PC-9 (cell line): ENCODE measurements at regions of chr10 and their contacts with region 1.

Region 1: GRCh38 chr10:3623746-3624145 is 161.3 kb downstream of the KLF6 start:
- DNase-seq: peak; percentile 55 to 92
- H3K4me3 ChIP-seq: peak overlapping the region; percentile 49; the same call in 1 of the 2 replicates
- H3K27ac ChIP-seq: peak overlapping the region; percentile 100
- H3K4me1 ChIP-seq: peaks cover 48% of the 10 kb centered on the region
- H3K27me3 ChIP-seq: no peaks in the 10 kb centered on the region
- CTCF ChIP-seq: no peak

Region 2: GRCh38 chr10:3248888-3249758 is 374.6 kb before region 1 on chr10:
- CTCF ChIA-PET with region 1: no interaction called
- POLR2A ChIA-PET with region 1: interaction called, 3 read pairs
- intact Hi-C with region 1: loop called (anchors 5 kb)
- DNase-seq: peak; percentile 41 to 81
- H3K4me3 ChIP-seq: peak overlapping the region; percentile 24; the same call in 1 of the 2 replicates
- H3K27ac ChIP-seq: peak overlapping the region; percentile 97
- H3K4me1 ChIP-seq: peaks cover 18% of the 10 kb centered on the region
- H3K27me3 ChIP-seq: no peaks in the 10 kb centered on the region
- CTCF ChIP-seq: no peak

Region 3: GRCh38 chr10:3435671-3436070 is 188.1 kb before region 1 on chr10:
- CTCF ChIA-PET with region 1: no interaction called
- POLR2A ChIA-PET with region 1: interaction called, 30 read pairs
- intact Hi-C with region 1: no loop called
- DNase-seq: no peak
- H3K4me3 ChIP-seq: no peak overlapping the region
- H3K27ac ChIP-seq: no peak overlapping the region
- H3K4me1 ChIP-seq: no peaks in the 10 kb centered on the region
- H3K27me3 ChIP-seq: no peaks in the 10 kb centered on the region
- CTCF ChIP-seq: no peak

Region 4: GRCh38 chr10:3494131-3494837 is 129.5 kb before region 1 on chr10:
- CTCF ChIA-PET with region 1: no interaction called
- POLR2A ChIA-PET with region 1: interaction called, 3 read pairs
- intact Hi-C with region 1: loop called (anchors 1 kb)
- DNase-seq: peak; percentile 50 to 75
- H3K4me3 ChIP-seq: peak overlapping the region; percentile 32
- H3K27ac ChIP-seq: peak overlapping the region; percentile 81
- H3K4me1 ChIP-seq: peaks cover 18% of the 10 kb centered on the region
- H3K27me3 ChIP-seq: no peaks in the 10 kb centered on the region
- CTCF ChIP-seq: no peak

Region 5: DNA sequence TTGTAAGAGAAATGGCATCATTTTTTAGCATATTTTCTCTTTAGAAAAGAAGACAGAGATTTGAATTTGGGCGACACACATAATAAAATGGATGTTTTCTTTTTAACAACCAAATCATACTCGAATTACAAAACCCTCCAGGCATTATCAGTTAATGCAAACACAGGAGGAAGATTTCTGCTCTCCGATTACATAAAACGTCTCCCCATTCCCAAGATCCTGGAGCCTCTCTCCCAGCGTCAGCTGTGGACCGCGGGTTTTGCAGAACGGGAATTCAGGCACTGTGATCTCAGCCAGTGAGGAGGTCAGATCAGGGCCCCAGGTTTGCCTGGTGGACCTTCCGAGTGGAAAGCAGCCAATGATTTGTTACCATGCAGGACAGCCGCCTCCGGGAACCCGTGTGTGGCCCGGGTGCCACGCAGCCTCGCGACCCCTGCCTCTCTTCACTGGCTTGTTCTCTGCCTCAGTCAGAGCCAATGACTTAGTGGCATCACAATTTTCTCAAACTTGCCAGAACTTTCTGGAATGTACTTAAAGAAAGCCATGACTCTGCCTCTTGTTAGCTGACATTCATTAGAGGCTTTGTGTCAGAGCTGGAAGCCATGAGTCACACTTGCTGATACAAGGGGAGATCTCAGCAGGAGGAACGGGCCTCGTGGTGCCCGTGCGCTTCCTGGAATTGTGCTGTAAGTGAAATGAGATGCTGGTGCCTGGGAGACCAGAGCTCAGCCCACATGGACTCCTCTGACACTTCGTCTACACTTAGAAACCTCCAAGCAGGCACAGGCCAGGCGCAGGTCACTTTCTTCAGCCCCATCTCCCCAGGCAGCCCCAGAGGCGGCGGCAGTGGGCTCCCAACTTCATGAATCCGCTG is 84.9 kb before region 1 on chr10:
- CTCF ChIA-PET with region 1: no interaction called
- POLR2A ChIA-PET with region 1: no interaction called
- intact Hi-C with region 1: loop called (anchors 1 kb)
- DNase-seq: peak; percentile 43 to 60
- H3K4me3 ChIP-seq: no peak overlapping the region
- H3K27ac ChIP-seq: no peak overlapping the region
- H3K4me1 ChIP-seq: peaks cover 17% of the 10 kb centered on the region
- H3K27me3 ChIP-seq: no peaks in the 10 kb centered on the region
- CTCF ChIP-seq: no peak

Region 6: DNA sequence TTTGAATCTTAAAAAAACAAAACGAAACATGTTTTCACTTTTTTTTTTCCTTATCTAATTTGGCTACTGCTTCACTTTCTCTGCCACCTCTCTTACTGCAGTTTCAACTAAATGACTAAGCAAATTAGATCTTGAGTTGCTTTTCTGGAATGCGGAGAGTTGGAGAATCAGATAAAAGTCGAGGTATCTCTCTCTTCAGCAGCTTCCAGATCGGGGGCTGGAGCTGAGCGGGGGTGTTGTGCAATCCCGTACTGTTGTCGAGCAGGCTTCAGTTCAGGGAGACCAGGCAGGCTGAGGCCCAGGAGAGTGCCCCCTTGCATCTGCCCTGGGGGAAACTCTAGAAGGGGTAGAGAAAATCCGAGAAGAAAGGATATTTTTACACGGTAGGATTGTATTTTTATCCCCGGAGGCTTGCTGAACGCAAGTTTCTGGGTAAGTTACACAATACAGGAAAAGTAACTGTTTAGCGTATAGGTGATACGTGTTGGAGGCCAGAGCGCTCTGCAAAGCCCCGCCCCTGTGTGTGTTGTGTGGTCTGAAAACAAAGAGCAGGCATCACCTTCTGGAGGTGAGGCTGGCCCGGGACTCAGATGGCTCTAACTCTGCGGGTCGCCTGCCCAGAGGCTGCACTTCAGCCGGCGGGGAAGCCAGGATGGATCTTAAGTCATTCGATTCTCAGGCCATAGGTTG is 44.7 kb after region 1 on chr10:
- CTCF ChIA-PET with region 1: no interaction called
- POLR2A ChIA-PET with region 1: no interaction called
- intact Hi-C with region 1: loop called (anchors 5 kb)
- DNase-seq: peak; percentile 87 to 94
- H3K4me3 ChIP-seq: peak overlapping the region; percentile 50; the same call in 1 of the 2 replicates
- H3K27ac ChIP-seq: peak overlapping the region; percentile 99
- H3K4me1 ChIP-seq: peaks cover 23% of the 10 kb centered on the region
- H3K27me3 ChIP-seq: no peaks in the 10 kb centered on the region
- CTCF ChIP-seq: no peak

Region 7: DNA sequence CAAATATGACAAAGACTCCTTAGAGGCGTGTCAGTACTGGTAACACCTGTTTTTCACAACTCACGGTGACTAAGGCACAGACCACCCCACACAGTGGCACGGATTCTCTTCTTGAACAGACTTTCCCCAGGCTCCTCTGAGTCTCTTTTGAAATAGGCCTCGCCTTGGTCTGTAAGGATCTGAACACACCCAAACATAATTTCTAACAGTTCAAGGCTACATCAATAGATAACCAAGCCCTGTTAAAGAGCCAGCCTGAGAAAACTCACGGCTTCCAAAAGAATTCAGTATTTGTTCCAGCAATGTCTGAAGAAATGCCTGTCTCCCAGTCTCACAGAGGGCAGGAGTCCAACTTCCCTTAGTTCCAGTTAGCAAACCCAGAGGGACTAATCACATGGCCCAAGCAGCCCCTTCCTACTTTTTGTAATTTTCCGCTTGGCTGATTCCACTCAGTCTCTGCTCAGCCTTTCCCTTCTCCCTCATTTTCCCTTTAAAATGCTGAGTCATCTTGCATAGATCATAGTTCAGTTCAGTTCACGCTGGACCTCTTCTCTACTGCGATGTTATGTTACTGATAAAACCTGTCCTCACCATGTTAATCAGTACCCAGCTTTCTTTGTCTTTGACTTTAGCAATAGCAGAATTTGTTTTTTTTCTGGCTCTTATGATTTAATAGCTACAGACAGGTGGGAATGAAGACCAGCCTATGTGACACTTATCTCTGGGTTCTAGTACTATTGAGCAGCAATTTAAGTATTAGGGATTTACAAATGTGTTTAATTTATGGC is 1447.9 kb after region 1 on chr10:
- CTCF ChIA-PET with region 1: no interaction called
- POLR2A ChIA-PET with region 1: no interaction called
- intact Hi-C with region 1: no loop called
- DNase-seq: peak; percentile 74 to 85
- H3K4me3 ChIP-seq: peak overlapping the region; percentile 38; the same call in 1 of the 2 replicates
- H3K27ac ChIP-seq: peak overlapping the region; percentile 99
- H3K4me1 ChIP-seq: peaks cover 50% of the 10 kb centered on the region
- H3K27me3 ChIP-seq: no peaks in the 10 kb centered on the region
- CTCF ChIP-seq: no peak